WTC11 (cell line): ENCODE measurements at regions of chrX and their contacts with region 1.

Region 1: GRCh38 chrX:40411340-40412111 is 169.2 kb upstream of the ATP6AP2 start:
- DNase-seq: peak; percentile 14
- ATAC-seq: peak; percentile 70
- H3K4me3 Mint-ChIP-seq: no peak overlapping the region
- H3K27ac Mint-ChIP-seq: no peak overlapping the region
- H3K4me1 Mint-ChIP-seq: peaks cover 33% of the 10 kb centered on the region
- H3K27me3 Mint-ChIP-seq: peaks cover 2% of the 10 kb centered on the region; the same call in 1 of the 2 replicates
- CTCF ChIP-seq: no peak

Region 2: GRCh38 chrX:40392599-40392998 is 18.9 kb before region 1 on chrX:
- CTCF ChIA-PET with region 1: interaction called, 10 read pairs
- POLR2A ChIA-PET with region 1: no interaction called
- DNase-seq: no peak
- ATAC-seq: peak; percentile 76
- H3K4me3 Mint-ChIP-seq: no peak overlapping the region
- H3K27ac Mint-ChIP-seq: no peak overlapping the region
- H3K4me1 Mint-ChIP-seq: no peaks in the 10 kb centered on the region
- H3K27me3 Mint-ChIP-seq: no peaks in the 10 kb centered on the region; the same call in 1 of the 2 replicates
- CTCF ChIP-seq: no peak

Region 3: GRCh38 chrX:40468033-40468846 is 56.7 kb after region 1 on chrX:
- CTCF ChIA-PET with region 1: interaction called, 15 read pairs
- POLR2A ChIA-PET with region 1: no interaction called
- DNase-seq: peak; percentile 16
- ATAC-seq: peak; percentile 81
- H3K4me3 Mint-ChIP-seq: no peak overlapping the region
- H3K27ac Mint-ChIP-seq: no peak overlapping the region
- H3K4me1 Mint-ChIP-seq: peaks cover 22% of the 10 kb centered on the region
- H3K27me3 Mint-ChIP-seq: peaks cover 23% of the 10 kb centered on the region
- CTCF ChIP-seq: no peak